Activated naive CD4-positive, alpha-beta T cell treated with anti-CD3 and anti-CD28 coated beads for 36 hours (primary cell): ENCODE measurements at regions of chrX and their contacts with region 1.

Region 1: GRCh38 chrX:9341291-9342201 is 123.3 kb upstream of the TBL1X start:
- DNase-seq: peak; percentile 83
- H3K4me3 Mint-ChIP-seq: peak overlapping the region; percentile 43
- H3K27ac Mint-ChIP-seq: peak overlapping the region; percentile 72
- H3K4me1 Mint-ChIP-seq: peaks cover 26% of the 10 kb centered on the region
- H3K27me3 Mint-ChIP-seq: peaks cover 2% of the 10 kb centered on the region

Region 2: DNA sequence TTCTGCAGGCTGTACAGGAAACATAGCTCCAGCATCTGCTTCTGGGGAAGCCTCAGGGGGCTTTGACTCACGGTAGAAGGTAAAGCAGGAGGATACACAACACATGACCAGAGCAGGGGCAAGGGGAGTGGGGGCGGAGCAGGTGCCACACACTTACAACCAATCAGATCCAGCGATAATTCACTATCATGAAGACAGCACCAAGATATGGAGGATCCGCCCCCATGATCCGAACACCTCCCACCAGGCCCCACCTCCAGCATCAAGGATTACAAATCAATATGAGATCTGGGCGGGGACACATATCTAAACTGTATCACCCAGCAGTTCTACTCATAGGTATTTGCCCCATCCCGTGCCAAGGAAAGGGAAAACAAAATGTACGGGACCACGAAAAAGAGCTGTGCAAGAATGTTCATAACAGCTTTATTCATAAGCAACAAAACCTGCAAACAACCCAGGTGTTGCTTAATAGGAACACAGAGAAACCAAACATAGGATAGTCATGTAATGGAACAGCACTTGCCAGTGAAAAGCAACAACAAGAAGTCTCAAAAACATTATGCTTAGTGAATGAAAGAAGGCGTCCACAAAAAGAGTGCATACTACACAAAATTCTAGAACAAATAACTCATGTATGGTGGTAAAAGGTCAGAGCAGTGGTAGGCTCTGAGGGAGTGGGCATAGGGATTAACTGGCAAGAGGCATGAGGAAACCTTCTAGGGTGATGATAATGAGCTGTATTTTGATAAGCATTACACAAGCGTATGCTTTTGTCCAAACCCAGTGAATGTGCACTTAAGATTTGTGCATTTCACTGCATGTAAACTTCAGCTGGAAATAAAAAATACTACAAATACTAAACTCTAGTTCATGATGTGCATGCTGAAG is 176.8 kb before region 1 on chrX:
- CTCF ChIA-PET with region 1: no interaction called
- intact Hi-C with region 1: loop called (anchors 1 kb)
- DNase-seq: no peak
- H3K4me3 Mint-ChIP-seq: no peak overlapping the region
- H3K27ac Mint-ChIP-seq: no peak overlapping the region
- H3K4me1 Mint-ChIP-seq: peaks cover 41% of the 10 kb centered on the region
- H3K27me3 Mint-ChIP-seq: no peaks in the 10 kb centered on the region

Region 3: GRCh38 chrX:9211269-9211668 is 130.3 kb before region 1 on chrX:
- CTCF ChIA-PET with region 1: no interaction called
- intact Hi-C with region 1: no loop called
- DNase-seq: no peak
- H3K4me3 Mint-ChIP-seq: no peak overlapping the region
- H3K27ac Mint-ChIP-seq: no peak overlapping the region
- H3K4me1 Mint-ChIP-seq: no peaks in the 10 kb centered on the region
- H3K27me3 Mint-ChIP-seq: no peaks in the 10 kb centered on the region

Region 4: DNA sequence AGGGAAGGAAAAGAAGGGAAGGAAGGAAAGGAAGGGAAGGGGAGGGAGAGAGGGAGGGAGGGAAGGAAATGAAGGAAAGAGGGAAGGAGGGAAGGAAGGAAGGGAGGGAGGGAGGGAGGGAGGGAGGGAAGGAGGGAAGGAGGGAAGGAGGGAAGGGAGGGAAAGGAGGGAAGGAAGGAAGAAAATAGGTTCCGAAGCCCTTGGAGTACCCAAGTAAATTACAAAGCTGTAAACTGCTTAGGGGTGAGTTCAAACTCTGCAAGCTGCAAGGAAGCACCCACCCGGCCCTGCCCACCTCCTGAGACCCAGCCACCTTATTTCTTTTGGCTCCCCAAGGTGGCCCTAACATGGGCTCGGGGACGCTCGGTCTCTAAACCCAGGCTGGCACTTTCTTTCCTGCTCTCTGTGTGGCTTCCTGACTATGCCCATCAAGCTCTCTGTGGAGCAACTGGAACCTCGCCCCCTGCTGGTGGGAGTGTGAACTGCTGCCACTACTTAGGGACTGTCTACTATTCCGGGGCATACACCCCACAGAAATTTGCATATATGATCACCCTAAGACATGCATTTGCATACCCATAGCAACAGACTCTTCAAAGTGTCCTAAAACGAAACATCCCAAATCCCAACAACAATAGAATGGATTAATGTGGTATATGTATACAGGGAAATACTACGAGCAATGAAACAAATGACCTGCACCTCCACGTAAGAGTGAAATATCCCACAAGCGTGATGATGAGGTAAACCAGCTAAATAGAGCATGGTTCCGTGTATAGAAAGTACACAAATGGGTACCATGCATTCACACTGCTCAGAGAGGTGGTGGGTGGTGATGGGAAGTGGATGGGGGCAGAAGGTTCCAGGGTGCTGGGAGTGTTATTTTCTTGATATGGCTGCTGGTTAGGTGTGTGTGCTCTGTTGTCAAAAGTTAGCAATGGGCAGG is 28.4 kb before region 1 on chrX:
- CTCF ChIA-PET with region 1: interaction called, 3 read pairs
- intact Hi-C with region 1: loop called (anchors 2 kb)
- DNase-seq: peak; percentile 82
- H3K4me3 Mint-ChIP-seq: no peak overlapping the region
- H3K27ac Mint-ChIP-seq: no peak overlapping the region
- H3K4me1 Mint-ChIP-seq: peaks cover 11% of the 10 kb centered on the region
- H3K27me3 Mint-ChIP-seq: no peaks in the 10 kb centered on the region

Region 5: DNA sequence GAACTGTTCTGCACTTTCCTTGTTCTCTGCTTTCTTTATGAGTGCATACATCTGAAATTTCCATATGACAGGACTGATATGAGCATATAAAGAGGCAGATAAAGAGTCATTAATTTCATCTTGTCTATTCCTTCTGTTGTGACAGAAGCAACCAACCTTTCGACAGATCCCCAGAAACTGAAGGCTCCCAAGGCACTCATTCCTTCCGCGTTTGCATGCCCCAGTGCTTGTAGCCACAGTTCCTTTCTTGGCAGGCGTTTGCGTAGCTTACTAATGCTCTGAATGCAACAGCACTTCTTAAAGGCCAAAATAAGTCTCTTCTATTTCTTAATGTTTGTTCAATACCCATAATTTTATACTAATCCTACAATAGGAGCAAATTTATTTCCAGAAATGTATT is 29.3 kb after region 1 on chrX:
- CTCF ChIA-PET with region 1: no interaction called
- intact Hi-C with region 1: loop called (anchors 1 kb)
- DNase-seq: no peak
- H3K4me3 Mint-ChIP-seq: no peak overlapping the region
- H3K27ac Mint-ChIP-seq: no peak overlapping the region
- H3K4me1 Mint-ChIP-seq: peaks cover 14% of the 10 kb centered on the region
- H3K27me3 Mint-ChIP-seq: no peaks in the 10 kb centered on the region

Region 6: GRCh38 chrX:9464435-9465371 is 123.2 kb after region 1 on chrX and contains the start of gene TBL1X:
- CTCF ChIA-PET with region 1: no interaction called
- intact Hi-C with region 1: loop called (anchors 1 kb)
- DNase-seq: peak; percentile 29
- H3K4me3 Mint-ChIP-seq: peak within 1 kb of the TSS; percentile 74
- H3K27ac Mint-ChIP-seq: peak within 1 kb of the TSS; percentile 82
- H3K4me1 Mint-ChIP-seq: peaks cover 40% of the 10 kb centered on the region
- H3K27me3 Mint-ChIP-seq: no peaks in the 10 kb centered on the region
- total RNA-seq, gene TBL1X: 20.7 to 21.6 TPM

Region 7: GRCh38 chrX:9677098-9677739 is 335.7 kb after region 1 on chrX:
- CTCF ChIA-PET with region 1: no interaction called
- intact Hi-C with region 1: loop called (anchors 1 kb)
- DNase-seq: peak; percentile 51
- H3K4me3 Mint-ChIP-seq: no peak overlapping the region
- H3K27ac Mint-ChIP-seq: peak overlapping the region; percentile 50
- H3K4me1 Mint-ChIP-seq: peaks cover 23% of the 10 kb centered on the region
- H3K27me3 Mint-ChIP-seq: no peaks in the 10 kb centered on the region

Region 8: DNA sequence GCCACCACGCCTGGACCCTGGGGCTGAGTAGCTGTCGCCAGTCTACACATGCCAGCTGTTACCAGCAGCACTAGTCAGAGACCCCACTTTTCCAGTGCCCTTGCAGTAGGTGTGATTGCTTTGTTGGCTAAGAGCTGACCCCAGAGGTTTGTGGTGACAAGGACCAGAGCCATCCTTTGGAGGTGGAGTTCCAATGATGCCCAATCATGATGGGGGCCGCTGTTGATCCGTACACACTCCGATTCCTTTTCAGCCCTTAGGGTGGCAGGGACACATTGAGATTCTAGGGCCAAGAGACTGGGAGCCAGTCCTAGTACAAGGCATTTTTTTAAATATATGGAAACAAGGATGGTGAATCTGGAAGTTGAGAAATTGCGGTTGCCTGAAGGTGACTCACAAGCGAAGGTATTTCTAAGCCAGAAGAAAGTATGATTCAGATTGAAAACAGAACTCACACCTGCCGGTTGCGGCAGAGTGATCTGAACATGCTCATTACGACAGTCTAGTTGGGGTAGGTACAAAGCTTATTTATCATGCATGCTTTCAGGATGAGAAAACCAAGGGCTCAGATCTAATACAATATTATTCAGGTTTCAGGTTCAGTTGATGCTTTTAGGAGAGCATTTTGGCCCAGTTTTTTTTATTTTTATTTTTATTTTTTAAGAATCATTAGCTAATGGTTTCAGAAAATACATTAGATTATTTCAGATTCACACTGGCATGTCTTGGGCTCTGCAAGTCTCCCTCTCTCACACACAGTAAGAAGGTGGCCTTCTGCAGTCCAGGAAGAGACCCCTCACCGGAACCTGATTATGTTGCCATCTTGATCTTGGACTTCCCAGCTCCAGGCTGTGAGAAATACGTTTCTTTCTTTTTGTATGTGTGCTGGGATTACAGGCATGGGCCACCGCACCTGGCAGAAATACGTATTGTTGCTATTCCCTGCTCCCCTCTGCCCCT is 488.0 kb after region 1 on chrX:
- CTCF ChIA-PET with region 1: no interaction called
- intact Hi-C with region 1: loop called (anchors 1 kb)
- DNase-seq: peak; percentile 71
- H3K4me3 Mint-ChIP-seq: no peak overlapping the region
- H3K27ac Mint-ChIP-seq: no peak overlapping the region
- H3K4me1 Mint-ChIP-seq: peaks cover 4% of the 10 kb centered on the region
- H3K27me3 Mint-ChIP-seq: peaks cover 13% of the 10 kb centered on the region